ENCODE measurements at regions of chr17 and their contacts with region 1.

Region 1: GRCh38 chr17:68172461-68172954 is 75.3 kb upstream of the AMZ2 start:
- DNase-seq: peak; percentile 35
- H3K4me3 ChIP-seq: no peak overlapping the region
- H3K27ac ChIP-seq: no peak overlapping the region
- H3K4me1 ChIP-seq: no peaks in the 10 kb centered on the region
- H3K27me3 ChIP-seq: no peaks in the 10 kb centered on the region
- CTCF ChIP-seq: peak; percentile 94 to 96

Region 2: DNA sequence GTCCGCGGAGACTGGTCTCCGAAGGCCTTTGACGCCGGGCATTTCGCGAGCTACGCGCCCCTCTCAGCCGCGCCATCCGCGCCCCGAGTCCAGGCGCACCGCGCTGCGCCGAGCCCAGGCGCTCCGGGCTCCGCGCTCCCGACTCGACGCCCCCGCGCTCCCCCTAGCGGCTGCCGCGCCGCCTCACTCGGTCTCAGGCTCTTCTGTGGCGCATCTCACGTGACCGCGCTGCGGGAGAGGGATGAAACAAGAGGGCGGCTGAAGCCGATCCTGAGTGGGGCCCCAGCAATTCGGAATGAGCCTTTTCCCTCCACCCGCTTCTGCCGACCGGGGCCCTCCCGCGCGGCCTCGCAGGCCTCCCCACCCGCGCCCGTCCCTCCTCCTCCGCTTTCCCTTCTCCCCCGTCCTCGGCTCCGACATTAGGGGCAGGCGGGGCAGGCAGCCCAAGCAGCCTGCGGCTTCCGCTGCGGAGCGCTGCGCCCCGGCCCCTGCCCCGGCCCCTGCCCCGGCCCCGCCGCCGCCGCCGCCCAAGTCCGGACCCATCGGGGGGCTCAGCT is 32.8 kb after region 1 on chr17:
- CTCF ChIA-PET with region 1: interaction called, 4 read pairs
- dilution Hi-C with region 1: no loop called
- in situ Hi-C with region 1: no loop called
- intact Hi-C with region 1: loop called (anchors 1 kb)
- DNase-seq: peak; percentile 76
- H3K4me3 ChIP-seq: peak overlapping the region; percentile 73 to 93 (median 82)
- H3K27ac ChIP-seq: peak overlapping the region; percentile 29
- H3K4me1 ChIP-seq: peaks cover 13% of the 10 kb centered on the region
- H3K27me3 ChIP-seq: no peaks in the 10 kb centered on the region
- CTCF ChIP-seq: peak; percentile 66 to 80

Region 3: GRCh38 chr17:68247445-68248198 is 75.1 kb after region 1 on chr17 and contains the start of gene AMZ2:
- CTCF ChIA-PET with region 1: no interaction called
- dilution Hi-C with region 1: no loop called
- in situ Hi-C with region 1: no loop called
- intact Hi-C with region 1: loop called (anchors 5 kb)
- DNase-seq: peak; percentile 91
- H3K4me3 ChIP-seq: peak within 1 kb of the TSS; percentile 67 to 93 (median 71)
- H3K27ac ChIP-seq: peak within 1 kb of the TSS; percentile 83
- H3K4me1 ChIP-seq: peaks cover 8% of the 10 kb centered on the region
- H3K27me3 ChIP-seq: no peaks in the 10 kb centered on the region
- CTCF ChIP-seq: no peak
- total RNA-seq, gene AMZ2: 96.4 to 124 TPM

Region 4: GRCh38 chr17:68435876-68436842 is 263.7 kb after region 1 on chr17:
- CTCF ChIA-PET with region 1: no interaction called
- dilution Hi-C with region 1: no loop called
- in situ Hi-C with region 1: no loop called
- intact Hi-C with region 1: loop called (anchors 1 kb)
- DNase-seq: peak; percentile 62
- H3K4me3 ChIP-seq: no peak overlapping the region
- H3K27ac ChIP-seq: peak overlapping the region; percentile 15
- H3K4me1 ChIP-seq: peaks cover 5% of the 10 kb centered on the region
- H3K27me3 ChIP-seq: no peaks in the 10 kb centered on the region
- CTCF ChIP-seq: peak; percentile 94 to 96